HepG2 (cell line): ENCODE measurements at regions of chr1 and their contacts with region 1.

Region 1: GRCh38 chr1:151839457-151840405 is at the start of gene C2CD4D:
- DNase-seq: peak; percentile 68
- ATAC-seq: peak; percentile 71
- H3K4me3 ChIP-seq: peak within 1 kb of the TSS; percentile 34 to 56 (median 42); a peak in 5 of 6 replicates
- H3K27ac ChIP-seq: no peak within 1 kb of the TSS
- H3K4me1 ChIP-seq: peaks cover 58% of the 10 kb centered on the region
- H3K27me3 ChIP-seq: peaks cover 0 to 5% of the 10 kb centered on the region in 2 experiments; a peak in 2 of 5 replicates
- CTCF ChIP-seq: 0 out of 2 replicates have a peak, but pooled peaks have one; percentile 12
- EP300 ChIP-seq: no peak
- POLR2A ChIP-seq: peak; percentile 55 to 57; a peak in 3 of 4 replicates
- RAD21 ChIP-seq: 0 out of 2 replicates have a peak, but pooled peaks have one; percentile 9
- total RNA-seq, gene C2CD4D: not detected in 2 replicates

Region 2: GRCh38 chr1:151443846-151444782 is 395.6 kb before region 1 on chr1:
- CTCF ChIA-PET with region 1: no interaction called
- POLR2A ChIA-PET with region 1: no interaction called
- in situ Hi-C with region 1: no loop called
- intact Hi-C with region 1: loop called (anchors 10 kb)
- DNase-seq: peak; percentile 69
- ATAC-seq: peak; percentile 93
- H3K4me3 ChIP-seq: no peak overlapping the region
- H3K27ac ChIP-seq: peak overlapping the region; percentile 11
- H3K4me1 ChIP-seq: no peaks in the 10 kb centered on the region
- H3K27me3 ChIP-seq: no peaks in the 10 kb centered on the region
- CTCF ChIP-seq: peak; percentile 73
- EP300 ChIP-seq: no peak
- POLR2A ChIP-seq: no peak
- RAD21 ChIP-seq: peak; percentile 60; the same call in 1 of the 2 replicates

Region 3: DNA sequence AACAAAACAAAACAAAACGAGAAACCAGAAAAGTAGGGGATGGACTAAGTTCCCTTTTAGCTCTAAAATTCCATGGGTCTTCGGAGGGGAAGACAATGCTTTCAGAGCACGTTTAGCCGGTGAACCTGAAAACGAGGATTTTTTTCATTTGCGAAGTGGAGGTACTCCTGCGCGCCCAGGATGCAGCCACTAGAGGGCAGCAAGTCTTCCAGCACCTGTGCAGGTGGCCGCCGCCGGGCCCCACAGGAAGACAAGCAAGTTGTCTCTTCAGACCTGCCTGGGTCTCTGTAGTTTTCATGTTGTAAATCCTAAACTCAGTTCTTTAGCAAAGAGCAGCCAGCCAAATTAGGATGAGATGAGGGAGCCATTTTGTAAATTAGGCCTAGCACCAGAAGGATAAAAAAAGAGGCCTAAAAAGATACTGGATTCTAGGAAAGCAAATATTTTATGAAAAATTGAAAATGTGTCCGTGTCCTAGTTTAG is 245.5 kb before region 1 on chr1:
- CTCF ChIA-PET with region 1: interaction called, 14 read pairs
- POLR2A ChIA-PET with region 1: no interaction called
- in situ Hi-C with region 1: loop called (anchors 10 kb)
- intact Hi-C with region 1: loop called (anchors 1 kb)
- DNase-seq: peak; percentile 59
- ATAC-seq: peak; percentile 92
- H3K4me3 ChIP-seq: peak overlapping the region in 2 of 3 experiments; percentile 15 to 21; a peak in 2 of 6 replicates
- H3K27ac ChIP-seq: no peak overlapping the region
- H3K4me1 ChIP-seq: peaks cover 34% of the 10 kb centered on the region
- H3K27me3 ChIP-seq: peaks cover 0 to 3% of the 10 kb centered on the region in 2 experiments; a peak in 1 of 5 replicates
- CTCF ChIP-seq: peak; percentile 91
- EP300 ChIP-seq: no peak
- POLR2A ChIP-seq: no peak
- RAD21 ChIP-seq: peak; percentile 80

Region 4: DNA sequence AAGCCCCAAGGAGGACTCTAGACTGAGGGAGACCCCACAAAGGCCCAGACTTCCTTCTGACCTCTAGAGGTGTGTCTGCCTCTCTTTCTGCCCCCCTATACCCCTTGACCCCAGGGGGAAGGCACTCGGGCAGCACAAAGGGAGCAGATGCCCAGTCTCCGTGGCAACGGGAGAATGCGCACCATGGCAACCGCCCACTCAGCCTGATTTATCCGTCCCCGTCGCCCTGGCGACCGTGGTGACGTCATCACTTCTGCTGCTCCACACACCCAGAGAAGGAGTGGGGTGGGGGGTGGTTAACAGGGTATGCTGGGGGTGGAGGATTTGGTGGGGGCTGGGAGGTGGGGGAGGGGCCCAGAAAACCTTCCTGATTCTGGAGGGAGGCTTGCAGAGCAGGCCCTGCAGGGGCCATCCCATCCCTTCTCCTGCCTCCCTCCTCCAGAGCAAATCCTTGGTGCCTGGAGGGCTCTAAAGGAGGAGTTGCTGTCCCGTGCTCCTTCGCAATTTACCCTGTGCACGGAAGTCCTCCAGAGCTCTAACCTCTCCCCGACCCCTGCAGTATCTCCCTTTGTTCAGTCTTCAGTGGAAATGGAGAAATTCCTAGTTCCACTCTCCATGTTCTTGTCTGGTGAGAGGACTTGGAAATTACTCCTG is 129.4 kb before region 1 on chr1:
- CTCF ChIA-PET with region 1: no interaction called
- POLR2A ChIA-PET with region 1: no interaction called
- in situ Hi-C with region 1: loop called (anchors 10 kb)
- intact Hi-C with region 1: no loop called
- DNase-seq: no peak
- ATAC-seq: no peak
- H3K4me3 ChIP-seq: no peak overlapping the region
- H3K27ac ChIP-seq: no peak overlapping the region
- H3K4me1 ChIP-seq: peaks cover 44% of the 10 kb centered on the region
- H3K27me3 ChIP-seq: peaks cover 0 to 5% of the 10 kb centered on the region in 2 experiments; a peak in 2 of 5 replicates
- CTCF ChIP-seq: no peak
- EP300 ChIP-seq: no peak
- POLR2A ChIP-seq: no peak
- RAD21 ChIP-seq: no peak

Region 5: DNA sequence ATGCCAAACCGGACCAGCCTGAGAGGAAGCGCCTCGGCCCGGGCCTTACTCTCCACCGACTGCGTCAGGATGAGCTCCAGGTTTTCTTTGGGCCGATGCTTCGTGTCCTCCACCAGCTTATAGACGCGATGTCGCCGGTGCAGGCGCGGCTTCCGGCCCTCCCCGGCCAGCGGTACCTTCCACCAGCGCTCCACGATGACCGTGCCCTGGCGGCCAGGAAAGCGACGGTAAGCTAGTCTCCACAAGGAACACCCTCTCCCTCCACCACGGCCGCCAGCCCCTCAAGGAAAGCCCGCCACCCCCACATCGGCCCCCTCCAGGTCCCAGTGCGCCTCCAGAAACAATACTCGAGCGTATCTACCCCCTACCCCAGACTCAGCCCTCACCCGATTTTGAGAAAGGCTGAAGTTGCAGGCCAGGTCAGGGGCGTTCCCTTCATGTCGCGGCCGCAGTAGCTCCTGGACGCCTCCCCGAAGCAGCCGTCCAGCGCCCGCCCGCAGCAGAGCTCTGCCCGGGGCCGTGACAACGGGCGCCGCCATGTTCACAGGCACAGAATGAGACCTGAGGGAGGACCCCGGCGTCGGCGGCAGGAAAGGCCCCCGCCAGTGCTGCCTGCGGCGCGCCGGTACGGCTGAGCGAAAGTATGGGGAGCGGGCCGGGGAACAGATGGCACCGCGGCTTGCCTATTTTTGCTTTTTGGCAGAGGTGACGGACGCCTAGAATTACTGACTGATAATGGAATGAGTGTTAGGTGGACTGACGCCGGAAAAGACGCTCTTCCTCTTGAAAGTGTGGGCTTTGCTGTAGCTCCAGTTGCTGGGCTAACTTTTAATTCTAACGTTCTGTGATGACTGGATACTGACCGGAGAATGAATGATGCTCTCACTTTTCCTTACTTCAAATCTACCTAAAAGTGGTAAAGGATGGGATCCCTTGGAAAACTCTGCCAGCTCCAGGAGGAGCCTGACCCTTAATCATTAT is 76.5 kb before region 1 on chr1 and contains the start of gene MRPL9:
- CTCF ChIA-PET with region 1: no interaction called
- POLR2A ChIA-PET with region 1: interaction called, 4 read pairs
- in situ Hi-C with region 1: no loop called
- intact Hi-C with region 1: loop called (anchors 10 kb)
- DNase-seq: peak; percentile 60
- ATAC-seq: peak; percentile 99
- H3K4me3 ChIP-seq: peak within 1 kb of the TSS; percentile 72 to 95 (median 92)
- H3K27ac ChIP-seq: peak within 1 kb of the TSS; percentile 83
- H3K4me1 ChIP-seq: peaks cover 24% of the 10 kb centered on the region
- H3K27me3 ChIP-seq: no peaks in the 10 kb centered on the region; a peak in 1 of 5 replicates
- CTCF ChIP-seq: no peak; the same call in 1 of the 2 replicates
- EP300 ChIP-seq: no peak
- POLR2A ChIP-seq: peak; percentile 69 to 72
- RAD21 ChIP-seq: no peak
- total RNA-seq, gene MRPL9: 107 and 119 TPM in 2 replicates

Region 6: GRCh38 chr1:151815716-151816327 is 23.9 kb before region 1 on chr1:
- CTCF ChIA-PET with region 1: no interaction called
- POLR2A ChIA-PET with region 1: no interaction called
- in situ Hi-C with region 1: no loop called
- intact Hi-C with region 1: no loop called
- DNase-seq: no peak
- ATAC-seq: no peak
- H3K4me3 ChIP-seq: no peak overlapping the region
- H3K27ac ChIP-seq: no peak overlapping the region
- H3K4me1 ChIP-seq: no peaks in the 10 kb centered on the region
- H3K27me3 ChIP-seq: no peaks in the 10 kb centered on the region
- CTCF ChIP-seq: no peak
- EP300 ChIP-seq: no peak
- POLR2A ChIP-seq: no peak
- RAD21 ChIP-seq: no peak